ENCODE measurements at regions of chr11 and their contacts with region 1.

Region 1: DNA sequence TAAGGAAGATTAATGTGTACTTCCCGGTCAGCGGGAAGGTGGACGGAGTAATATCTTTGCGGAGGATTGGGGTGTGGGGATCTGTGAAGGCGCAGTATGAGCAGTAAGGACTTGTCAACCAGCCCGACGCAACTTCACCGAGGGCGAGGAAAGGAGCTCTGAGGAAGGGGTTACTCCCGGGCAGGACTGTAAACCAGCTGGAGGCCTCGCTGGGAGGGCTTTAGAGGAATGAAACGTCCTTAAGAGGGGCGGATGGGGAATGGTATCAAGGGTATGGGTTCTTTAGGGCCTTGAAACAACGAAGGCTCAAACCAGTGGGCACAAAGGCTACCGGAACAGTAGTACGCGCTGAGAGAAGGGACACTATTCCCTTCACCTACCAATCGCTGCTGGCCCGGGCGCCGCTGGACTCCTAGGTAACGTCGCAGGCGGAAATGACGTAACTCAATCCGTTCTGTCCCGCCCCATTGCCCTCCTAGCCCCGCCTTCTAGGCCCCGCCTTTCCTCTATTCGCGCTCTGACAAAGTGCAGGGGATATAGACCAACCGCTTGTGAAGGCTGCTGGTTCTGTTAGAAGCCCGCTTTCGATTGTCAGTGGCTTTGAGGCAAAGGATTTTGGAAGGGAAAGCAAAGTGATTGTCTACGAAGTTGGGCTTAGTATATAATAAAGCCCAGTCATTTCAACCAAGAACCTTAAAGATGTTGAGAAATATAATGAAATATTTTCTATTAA is at the start of gene C11orf65:
- DNase-seq: peak; percentile 93 to 98 (median 95)
- ATAC-seq: peak; percentile 96
- H3K4me3 ChIP-seq: peak within 1 kb of the TSS; percentile 65 to 66
- H3K4me3 Mint-ChIP-seq: peak within 1 kb of the TSS; percentile 98
- H3K27ac ChIP-seq: peak within 1 kb of the TSS; percentile 93 to 94
- H3K27ac Mint-ChIP-seq: peak within 1 kb of the TSS; percentile 100
- H3K4me1 ChIP-seq: peaks cover 14% of the 10 kb centered on the region
- H3K4me1 Mint-ChIP-seq: peaks cover 8% of the 10 kb centered on the region
- H3K27me3 ChIP-seq: no peaks in the 10 kb centered on the region
- H3K27me3 Mint-ChIP-seq: no peaks in the 10 kb centered on the region
- CTCF ChIP-seq: no peak
- total RNA-seq, gene C11orf65: 0.31 TPM in 1 of 2 experiments, not detected in the other

Region 2: GRCh38 chr11:108008656-108009496 is 458.4 kb before region 1 on chr11 and contains the start of gene CUL5:
- CTCF ChIA-PET with region 1: no interaction called
- POLR2A ChIA-PET with region 1: no interaction called
- intact Hi-C with region 1: loop called (anchors 1 to 5 kb)
- DNase-seq: peak; percentile 83 to 95 (median 89)
- ATAC-seq: peak; percentile 88
- H3K4me3 ChIP-seq: peak within 1 kb of the TSS; percentile 99
- H3K4me3 Mint-ChIP-seq: no peak within 1 kb of the TSS
- H3K27ac ChIP-seq: peak within 1 kb of the TSS; percentile 97 to 98
- H3K27ac Mint-ChIP-seq: peak within 1 kb of the TSS; percentile 98
- H3K4me1 ChIP-seq: peaks cover 24% of the 10 kb centered on the region
- H3K4me1 Mint-ChIP-seq: peaks cover 3% of the 10 kb centered on the region
- H3K27me3 ChIP-seq: no peaks in the 10 kb centered on the region
- H3K27me3 Mint-ChIP-seq: no peaks in the 10 kb centered on the region
- CTCF ChIP-seq: peak; percentile 70
- total RNA-seq, gene CUL5: 73.3 to 75.0 TPM

Region 3: DNA sequence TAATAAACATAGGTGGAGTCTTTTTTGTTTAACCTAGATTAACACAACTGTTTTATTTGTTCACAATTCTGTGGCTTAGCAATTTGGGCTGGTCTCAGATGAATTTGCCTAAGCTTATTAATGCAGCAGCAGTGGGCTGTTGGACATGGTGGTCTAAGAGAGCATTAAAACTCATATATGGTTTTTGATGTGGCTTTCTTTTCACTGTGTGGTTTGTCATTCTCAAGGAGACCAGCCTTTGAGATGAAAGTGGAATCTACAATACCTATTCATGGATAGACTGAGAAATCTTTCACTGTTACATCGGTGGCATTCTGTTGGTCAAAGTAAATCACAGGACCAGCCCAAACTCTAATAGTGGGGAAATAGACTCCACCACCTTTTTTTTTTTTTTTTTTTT is 419.0 kb before region 1 on chr11:
- CTCF ChIA-PET with region 1: no interaction called
- POLR2A ChIA-PET with region 1: no interaction called
- intact Hi-C with region 1: no loop called
- DNase-seq: no peak
- ATAC-seq: no peak
- H3K4me3 ChIP-seq: no peak overlapping the region
- H3K4me3 Mint-ChIP-seq: no peak overlapping the region
- H3K27ac ChIP-seq: no peak overlapping the region
- H3K27ac Mint-ChIP-seq: no peak overlapping the region
- H3K4me1 ChIP-seq: no peaks in the 10 kb centered on the region
- H3K4me1 Mint-ChIP-seq: peaks cover 8% of the 10 kb centered on the region
- H3K27me3 ChIP-seq: no peaks in the 10 kb centered on the region
- H3K27me3 Mint-ChIP-seq: no peaks in the 10 kb centered on the region
- CTCF ChIP-seq: no peak

Region 4: GRCh38 chr11:108216988-108217387 is 250.3 kb before region 1 on chr11:
- CTCF ChIA-PET with region 1: no interaction called
- POLR2A ChIA-PET with region 1: no interaction called
- intact Hi-C with region 1: loop called (anchors 1 to 10 kb)
- DNase-seq: peak in 1 of 9 experiments; percentile 43
- ATAC-seq: peak; percentile 51
- H3K4me3 ChIP-seq: no peak overlapping the region
- H3K4me3 Mint-ChIP-seq: peak overlapping the region; percentile 47
- H3K27ac ChIP-seq: no peak overlapping the region
- H3K27ac Mint-ChIP-seq: peak overlapping the region; percentile 53
- H3K4me1 ChIP-seq: peaks cover 71% of the 10 kb centered on the region
- H3K4me1 Mint-ChIP-seq: peaks cover 76% of the 10 kb centered on the region
- H3K27me3 ChIP-seq: no peaks in the 10 kb centered on the region
- H3K27me3 Mint-ChIP-seq: no peaks in the 10 kb centered on the region
- CTCF ChIP-seq: no peak

Region 5: DNA sequence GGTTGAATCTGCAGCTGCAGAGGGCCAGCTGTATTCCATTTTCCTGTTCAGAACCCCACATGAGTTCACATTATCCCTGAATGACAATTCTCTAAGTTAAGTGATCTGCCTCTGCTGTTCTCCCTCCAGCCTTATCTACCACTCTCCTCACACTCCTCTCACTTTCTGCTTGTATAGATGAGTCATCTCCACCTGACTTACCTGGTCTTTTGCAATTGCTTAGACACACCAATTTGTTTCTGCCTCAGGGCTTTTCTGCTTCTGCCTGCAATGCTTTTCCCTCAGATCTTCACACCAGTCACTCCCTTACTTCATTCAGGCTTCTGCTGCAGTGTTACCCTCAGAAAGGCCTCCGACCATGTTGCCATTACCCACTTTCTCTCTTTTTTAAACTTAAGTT is 126.3 kb before region 1 on chr11:
- CTCF ChIA-PET with region 1: no interaction called
- POLR2A ChIA-PET with region 1: no interaction called
- intact Hi-C with region 1: loop called in 1 of 2 experiments (anchors 10 kb)
- DNase-seq: no peak
- ATAC-seq: no peak
- H3K4me3 ChIP-seq: no peak overlapping the region
- H3K4me3 Mint-ChIP-seq: no peak overlapping the region
- H3K27ac ChIP-seq: no peak overlapping the region
- H3K27ac Mint-ChIP-seq: peak overlapping the region; percentile 88
- H3K4me1 ChIP-seq: no peaks in the 10 kb centered on the region
- H3K4me1 Mint-ChIP-seq: peaks cover 39% of the 10 kb centered on the region
- H3K27me3 ChIP-seq: no peaks in the 10 kb centered on the region
- H3K27me3 Mint-ChIP-seq: no peaks in the 10 kb centered on the region
- CTCF ChIP-seq: no peak

Region 6: DNA sequence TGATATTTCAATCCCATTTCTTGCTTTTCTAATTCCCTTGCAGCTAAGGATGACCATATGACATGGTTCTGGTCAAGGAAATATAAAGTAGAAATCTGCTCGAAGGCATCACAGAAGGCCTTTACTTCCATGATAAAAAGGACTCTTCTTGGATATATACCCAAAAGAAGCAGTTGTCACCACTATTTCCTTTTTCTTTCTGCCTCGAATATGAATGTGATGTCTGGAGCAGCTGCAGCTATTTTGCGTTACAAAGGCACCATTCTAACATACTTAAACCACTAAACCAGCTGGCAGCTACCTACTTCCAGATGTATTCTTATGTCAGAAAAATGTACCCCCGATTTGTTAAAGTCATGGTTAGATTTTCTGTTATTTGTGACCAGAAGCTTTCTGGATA is 107.4 kb after region 1 on chr11:
- CTCF ChIA-PET with region 1: no interaction called
- POLR2A ChIA-PET with region 1: no interaction called
- intact Hi-C with region 1: no loop called
- DNase-seq: no peak
- ATAC-seq: no peak
- H3K4me3 ChIP-seq: no peak overlapping the region
- H3K4me3 Mint-ChIP-seq: no peak overlapping the region
- H3K27ac ChIP-seq: no peak overlapping the region
- H3K27ac Mint-ChIP-seq: no peak overlapping the region
- H3K4me1 ChIP-seq: no peaks in the 10 kb centered on the region
- H3K4me1 Mint-ChIP-seq: peaks cover 4% of the 10 kb centered on the region
- H3K27me3 ChIP-seq: no peaks in the 10 kb centered on the region
- H3K27me3 Mint-ChIP-seq: peaks cover 8% of the 10 kb centered on the region
- CTCF ChIP-seq: no peak

Region 7: DNA sequence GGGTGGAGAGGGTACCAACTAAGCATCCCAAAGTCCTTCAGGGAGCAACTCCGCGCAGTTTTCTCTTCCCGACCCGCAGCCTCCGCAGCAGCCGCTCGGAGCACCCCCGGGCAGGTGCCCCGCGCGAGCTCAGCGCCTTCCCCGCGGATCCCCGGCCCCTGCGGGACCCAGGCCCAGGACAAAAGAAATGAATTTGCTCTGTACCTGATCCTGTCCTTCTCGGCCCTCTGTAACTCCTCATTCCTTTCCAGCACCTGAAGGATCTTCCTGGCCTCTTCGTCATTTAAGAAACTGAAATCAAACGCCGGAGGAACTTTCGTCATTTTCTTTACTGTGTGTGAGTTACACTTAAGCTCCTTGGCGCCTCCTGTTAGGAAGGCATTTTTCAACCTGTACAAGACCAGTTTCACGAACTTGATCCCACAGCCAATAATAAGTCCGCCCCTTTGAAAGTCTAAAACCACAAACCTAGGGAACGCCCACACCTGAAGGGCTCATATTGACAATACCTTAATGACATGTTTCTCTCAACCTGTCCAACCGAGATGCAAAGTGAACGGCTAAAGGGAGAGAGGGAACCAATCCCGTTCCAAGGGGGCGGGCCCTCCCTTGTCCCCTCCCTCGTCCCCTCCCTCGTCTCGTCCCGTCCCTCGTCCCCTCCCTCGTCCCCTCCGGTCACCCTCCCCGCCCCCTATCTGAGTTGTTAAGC is 126.1 kb after region 1 on chr11 and contains the start of gene EXPH5:
- CTCF ChIA-PET with region 1: no interaction called
- POLR2A ChIA-PET with region 1: no interaction called
- intact Hi-C with region 1: loop called (anchors 1 to 2 kb)
- DNase-seq: peak; percentile 65 to 91 (median 85)
- ATAC-seq: peak; percentile 94
- H3K4me3 ChIP-seq: peak within 1 kb of the TSS; percentile 63 to 66
- H3K4me3 Mint-ChIP-seq: peak within 1 kb of the TSS; percentile 95
- H3K27ac ChIP-seq: peak within 1 kb of the TSS; percentile 22 to 69
- H3K27ac Mint-ChIP-seq: peak within 1 kb of the TSS; percentile 90
- H3K4me1 ChIP-seq: peaks cover 14% of the 10 kb centered on the region
- H3K4me1 Mint-ChIP-seq: peaks cover 16% of the 10 kb centered on the region
- H3K27me3 ChIP-seq: peaks cover 0 to 4% of the 10 kb centered on the region in 2 experiments
- H3K27me3 Mint-ChIP-seq: peaks cover 13% of the 10 kb centered on the region
- CTCF ChIP-seq: no peak
- total RNA-seq, gene EXPH5: 1.5 to 1.7 TPM